ENCODE measurements at regions of chr1 and their contacts with region 1.

Region 1: DNA sequence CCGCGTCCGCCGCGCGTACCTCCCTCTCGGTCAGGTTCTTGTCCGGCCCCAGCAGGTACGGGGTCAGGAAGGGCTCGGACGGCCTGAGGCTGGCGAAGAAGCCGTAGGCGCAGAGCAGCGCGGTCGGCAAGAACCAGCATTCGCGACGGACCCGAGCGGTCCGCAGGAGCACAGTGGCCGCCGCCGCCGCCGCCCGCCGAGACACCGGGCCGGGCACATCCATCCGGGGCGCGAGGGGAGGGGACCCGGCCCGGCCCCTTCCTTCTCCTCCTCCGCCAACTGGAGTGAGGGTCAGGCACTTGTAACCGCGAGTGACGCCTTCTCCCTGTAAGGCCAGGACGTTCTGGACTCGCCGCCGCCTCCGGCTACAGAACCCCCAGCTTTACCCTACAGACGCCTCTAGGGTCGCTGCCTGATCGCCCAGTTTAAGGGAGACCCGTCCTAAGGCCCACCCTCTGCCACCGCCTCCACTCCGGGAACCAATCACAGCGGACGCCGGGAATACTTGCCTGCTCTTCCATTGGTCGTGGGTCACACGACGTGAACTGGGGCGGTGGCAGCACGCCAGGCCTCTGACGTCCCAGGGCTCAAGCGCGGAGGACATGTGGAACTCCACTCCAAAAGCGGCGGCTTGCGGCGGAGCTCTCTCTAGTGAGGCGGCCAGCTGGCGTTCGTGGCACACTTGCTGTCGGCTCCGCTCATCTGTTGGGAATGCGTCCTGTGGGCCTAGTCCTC is at the start of gene SLC19A2:
- DNase-seq: peak; percentile 96
- ATAC-seq: peak; percentile 99
- H3K4me3 Mint-ChIP-seq: peak within 1 kb of the TSS; percentile 93
- H3K27ac Mint-ChIP-seq: peak within 1 kb of the TSS; percentile 94
- H3K4me1 Mint-ChIP-seq: peaks cover 48% of the 10 kb centered on the region
- H3K27me3 Mint-ChIP-seq: peaks cover 1% of the 10 kb centered on the region
- total RNA-seq, gene SLC19A2: 4.0 to 4.4 TPM

Region 2: GRCh38 chr1:168234846-168235547 is 1250.7 kb before region 1 on chr1:
- CTCF ChIA-PET with region 1: no interaction called
- POLR2A ChIA-PET with region 1: no interaction called
- intact Hi-C with region 1: loop called in 1 of 2 experiments (anchors 5 kb)
- DNase-seq: peak; percentile 58
- ATAC-seq: peak; percentile 77
- H3K4me3 Mint-ChIP-seq: no peak overlapping the region
- H3K27ac Mint-ChIP-seq: peak overlapping the region; percentile 55
- H3K4me1 Mint-ChIP-seq: peaks cover 57% of the 10 kb centered on the region
- H3K27me3 Mint-ChIP-seq: no peaks in the 10 kb centered on the region

Region 3: GRCh38 chr1:169003864-169004516 is 481.7 kb before region 1 on chr1:
- CTCF ChIA-PET with region 1: no interaction called
- POLR2A ChIA-PET with region 1: no interaction called
- intact Hi-C with region 1: no loop called
- DNase-seq: no peak
- ATAC-seq: no peak
- H3K4me3 Mint-ChIP-seq: no peak overlapping the region
- H3K27ac Mint-ChIP-seq: no peak overlapping the region
- H3K4me1 Mint-ChIP-seq: no peaks in the 10 kb centered on the region
- H3K27me3 Mint-ChIP-seq: no peaks in the 10 kb centered on the region

Region 4: GRCh38 chr1:169133801-169134502 is 351.8 kb before region 1 on chr1:
- CTCF ChIA-PET with region 1: no interaction called
- POLR2A ChIA-PET with region 1: no interaction called
- intact Hi-C with region 1: loop called in 1 of 2 experiments (anchors 10 kb)
- DNase-seq: no peak
- ATAC-seq: no peak
- H3K4me3 Mint-ChIP-seq: no peak overlapping the region
- H3K27ac Mint-ChIP-seq: no peak overlapping the region
- H3K4me1 Mint-ChIP-seq: peaks cover 13% of the 10 kb centered on the region
- H3K27me3 Mint-ChIP-seq: no peaks in the 10 kb centered on the region

Region 5: DNA sequence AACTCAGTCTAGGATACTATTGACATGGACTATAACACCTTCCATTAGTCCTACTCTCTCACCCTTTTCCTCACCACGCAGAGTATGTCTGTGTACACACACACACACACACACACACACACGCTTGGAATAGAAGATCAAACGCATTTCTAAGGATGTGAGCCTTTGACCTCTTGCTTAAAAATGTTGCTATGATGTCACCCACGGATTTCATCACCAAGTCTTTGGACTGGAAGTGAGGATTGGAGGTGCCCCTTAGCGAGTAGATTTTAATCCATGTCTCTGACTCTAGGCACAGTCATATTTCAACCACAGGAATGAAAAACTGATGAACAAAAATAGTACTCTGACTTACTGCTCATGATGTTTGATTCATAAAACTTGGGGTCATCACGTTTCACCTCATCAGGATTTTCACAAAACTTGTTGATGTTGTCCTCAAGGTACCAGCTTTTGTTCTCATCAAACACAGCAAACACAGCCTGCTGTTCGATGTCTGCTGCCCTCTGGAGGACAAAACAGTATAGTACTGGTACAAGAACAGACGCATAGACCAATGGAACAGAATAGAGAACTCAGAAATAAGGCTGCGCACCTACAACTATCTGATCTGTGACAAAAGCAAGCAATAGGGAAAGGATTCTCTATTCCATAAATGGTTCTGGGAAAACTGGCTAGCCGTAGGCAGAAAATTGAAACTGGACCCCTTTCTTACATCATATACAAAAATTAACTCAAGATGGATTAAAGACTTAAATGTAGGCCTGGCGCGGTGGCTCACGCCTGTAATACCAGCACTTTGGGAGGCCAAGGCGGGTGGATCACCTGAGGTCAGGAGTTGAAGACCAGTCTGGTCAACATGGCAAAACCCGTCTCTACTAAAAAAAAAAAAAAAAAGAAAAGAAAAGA is 60.6 kb after region 1 on chr1:
- CTCF ChIA-PET with region 1: interaction called, 3 read pairs
- POLR2A ChIA-PET with region 1: no interaction called
- intact Hi-C with region 1: loop called in 1 of 2 experiments (anchors 1 kb)
- DNase-seq: peak; percentile 57
- ATAC-seq: peak; percentile 81
- H3K4me3 Mint-ChIP-seq: no peak overlapping the region
- H3K27ac Mint-ChIP-seq: peak overlapping the region; percentile 2
- H3K4me1 Mint-ChIP-seq: no peaks in the 10 kb centered on the region
- H3K27me3 Mint-ChIP-seq: no peaks in the 10 kb centered on the region

Region 6: DNA sequence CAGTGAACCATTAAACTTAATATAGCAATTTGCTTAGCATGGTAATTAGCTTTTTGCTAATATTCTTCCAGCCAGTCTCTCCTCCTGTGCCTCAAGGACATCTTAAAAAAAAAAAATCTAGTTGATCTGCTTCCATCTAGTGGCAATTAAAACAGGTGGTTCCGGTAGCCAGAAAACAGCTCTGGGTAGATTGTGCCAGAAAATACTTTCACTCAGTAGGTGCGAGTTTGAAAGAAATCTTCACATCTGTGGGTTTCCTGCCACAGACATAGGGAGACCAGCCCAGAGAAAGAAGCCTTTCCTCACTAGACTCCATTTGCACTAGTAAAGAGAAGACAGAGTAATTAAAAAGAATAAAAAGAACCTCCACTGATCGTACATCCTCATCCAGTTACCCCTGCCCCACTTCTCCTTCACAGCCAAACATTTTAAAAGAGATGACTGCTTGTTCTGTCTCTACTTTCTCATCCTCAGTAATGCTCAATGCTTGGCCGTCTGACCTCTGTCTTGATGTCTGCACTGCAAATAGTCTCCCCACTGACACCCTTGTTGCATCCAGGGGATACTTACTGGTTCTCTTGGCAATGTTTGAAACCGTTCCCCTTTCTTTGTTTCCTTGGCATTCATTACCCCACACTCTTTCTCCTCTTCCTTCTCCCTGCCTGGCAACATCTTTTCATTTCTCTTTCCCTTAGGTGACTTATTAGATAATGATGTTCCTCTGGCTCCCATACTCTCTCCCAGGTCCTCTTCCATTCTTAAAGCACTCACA is 208.8 kb after region 1 on chr1:
- CTCF ChIA-PET with region 1: interaction called, 3 read pairs
- POLR2A ChIA-PET with region 1: no interaction called
- intact Hi-C with region 1: loop called (anchors 5 kb)
- DNase-seq: peak; percentile 52
- ATAC-seq: peak; percentile 26
- H3K4me3 Mint-ChIP-seq: peak overlapping the region; percentile 39
- H3K27ac Mint-ChIP-seq: peak overlapping the region; percentile 95
- H3K4me1 Mint-ChIP-seq: peaks cover 97% of the 10 kb centered on the region
- H3K27me3 Mint-ChIP-seq: no peaks in the 10 kb centered on the region

Region 7: DNA sequence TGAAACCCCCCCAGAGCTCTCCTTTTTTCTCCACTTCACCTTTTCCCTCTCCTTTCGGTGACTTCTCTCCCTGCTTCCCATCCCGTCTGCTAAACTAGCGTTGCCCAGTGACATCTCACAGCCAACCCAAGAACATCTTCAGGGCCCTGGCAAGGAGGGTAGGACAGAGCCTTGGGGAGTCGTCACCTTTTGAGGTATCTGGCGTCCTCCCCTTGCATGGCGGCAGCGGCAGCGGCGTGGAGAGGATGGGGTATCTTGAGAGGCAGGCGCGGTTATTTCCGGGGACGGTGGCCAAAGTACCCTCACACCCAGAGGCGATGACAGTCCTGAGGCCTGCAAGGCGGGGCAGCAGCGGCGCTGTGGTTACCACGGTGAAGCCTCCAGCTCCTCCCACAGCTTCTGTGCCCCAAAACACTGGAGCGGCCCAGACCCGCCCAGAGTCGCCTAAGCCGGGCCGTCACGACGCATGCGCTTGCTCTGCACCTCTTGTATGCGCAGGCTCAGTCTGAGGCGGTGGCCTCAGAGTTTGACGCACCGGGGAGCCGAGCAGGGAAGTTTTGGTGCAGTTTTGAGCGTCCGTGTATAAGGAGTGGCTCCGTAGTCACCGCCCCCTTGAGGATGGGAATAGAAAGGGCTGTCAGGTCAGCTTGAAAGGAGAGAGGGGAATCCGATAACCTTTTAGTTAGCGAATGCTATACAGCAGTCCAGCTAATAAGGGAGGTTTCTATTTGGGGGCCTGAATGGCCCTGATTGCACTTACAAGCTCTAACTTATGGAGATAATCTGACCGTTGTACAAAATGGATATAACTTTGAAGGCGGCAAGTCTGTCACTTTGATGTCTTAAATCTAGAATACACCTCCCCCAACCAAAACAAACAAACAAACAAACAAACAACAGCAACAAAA is 588.8 kb after region 1 on chr1 and contains the start of gene KIFAP3:
- CTCF ChIA-PET with region 1: no interaction called
- POLR2A ChIA-PET with region 1: no interaction called
- intact Hi-C with region 1: loop called in 1 of 2 experiments (anchors 5 kb)
- DNase-seq: peak; percentile 98
- ATAC-seq: peak; percentile 99
- H3K4me3 Mint-ChIP-seq: peak within 1 kb of the TSS; percentile 96
- H3K27ac Mint-ChIP-seq: peak within 1 kb of the TSS; percentile 87
- H3K4me1 Mint-ChIP-seq: peaks cover 43% of the 10 kb centered on the region
- H3K27me3 Mint-ChIP-seq: no peaks in the 10 kb centered on the region
- total RNA-seq, gene KIFAP3: 10.9 to 11.5 TPM

Measured in activated CD4-positive, alpha-beta T cell treated with anti-CD3 and anti-CD28 coated beads for 36 hours (primary cell).